HCT116 (cell line): ENCODE measurements at regions of chr4 and their contacts with region 1.

Region 1: GRCh38 chr4:182938205-182938645 is 21.0 kb upstream of the DCTD start:
- DNase-seq: peak; percentile 73
- ATAC-seq: peak; percentile 100
- H3K4me3 ChIP-seq: no peak overlapping the region
- H3K27ac ChIP-seq: no peak overlapping the region
- H3K4me1 ChIP-seq: peaks cover 0 to 7% of the 10 kb centered on the region in 2 experiments; a peak in 3 of 4 replicates
- H3K27me3 ChIP-seq: no peaks in the 10 kb centered on the region
- CTCF ChIP-seq: peak; percentile 90 to 93 (median 91)
- POLR2A ChIP-seq: no peak
- RAD21 ChIP-seq: peak; percentile 98

Region 2: GRCh38 chr4:182925298-182925738 is 12.9 kb before region 1 on chr4:
- CTCF ChIA-PET with region 1: interaction called, 27 read pairs
- POLR2A ChIA-PET with region 1: no interaction called
- RAD21 ChIA-PET with region 1: no interaction called
- intact Hi-C with region 1: no loop called
- DNase-seq: peak; percentile 91
- ATAC-seq: peak; percentile 99
- H3K4me3 ChIP-seq: no peak overlapping the region
- H3K27ac ChIP-seq: no peak overlapping the region
- H3K4me1 ChIP-seq: peaks cover 0 to 5% of the 10 kb centered on the region in 2 experiments; a peak in 1 of 4 replicates
- H3K27me3 ChIP-seq: no peaks in the 10 kb centered on the region
- CTCF ChIP-seq: peak; percentile 85 to 99 (median 89)
- POLR2A ChIP-seq: no peak
- RAD21 ChIP-seq: peak; percentile 96

Region 3: DNA sequence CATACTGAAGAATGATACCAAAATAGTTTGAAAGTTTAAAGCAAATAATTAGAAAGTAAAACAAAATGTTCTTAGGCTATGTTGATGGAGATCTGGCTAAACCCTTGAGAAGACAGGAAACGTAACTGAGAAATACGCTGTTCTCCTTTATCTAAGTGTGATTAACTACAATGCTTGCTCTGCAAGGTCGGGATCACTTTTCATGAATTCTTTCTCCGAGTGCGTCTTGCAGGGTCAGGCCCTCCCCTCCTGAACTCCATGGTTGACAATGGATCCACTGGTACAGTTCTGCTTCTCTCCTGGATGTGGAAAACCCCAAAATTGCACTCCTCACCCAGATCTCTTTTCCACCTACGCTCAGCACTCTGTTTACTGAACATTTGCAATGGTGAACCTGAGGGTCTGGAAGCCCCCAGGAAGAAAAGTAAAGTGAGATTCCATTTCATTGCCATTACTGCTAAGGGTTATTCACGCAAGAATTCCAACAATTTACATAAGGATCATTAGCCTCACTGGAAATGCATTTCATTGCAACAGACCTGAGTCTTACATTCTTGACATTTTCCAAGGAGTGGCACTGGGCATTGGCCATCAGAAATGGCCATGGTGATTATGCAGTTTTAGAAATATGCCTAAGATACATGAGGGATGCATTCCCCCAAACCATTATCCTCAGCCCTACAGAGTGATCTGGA is 136.2 kb after region 1 on chr4:
- CTCF ChIA-PET with region 1: interaction called, 10 read pairs
- POLR2A ChIA-PET with region 1: no interaction called
- RAD21 ChIA-PET with region 1: interaction called, 3 read pairs
- intact Hi-C with region 1: loop called (anchors 2 kb)
- DNase-seq: no peak
- ATAC-seq: no peak
- H3K4me3 ChIP-seq: no peak overlapping the region
- H3K27ac ChIP-seq: no peak overlapping the region
- H3K4me1 ChIP-seq: no peaks in the 10 kb centered on the region
- H3K27me3 ChIP-seq: no peaks in the 10 kb centered on the region
- CTCF ChIP-seq: no peak
- POLR2A ChIP-seq: no peak
- RAD21 ChIP-seq: no peak

Region 4: DNA sequence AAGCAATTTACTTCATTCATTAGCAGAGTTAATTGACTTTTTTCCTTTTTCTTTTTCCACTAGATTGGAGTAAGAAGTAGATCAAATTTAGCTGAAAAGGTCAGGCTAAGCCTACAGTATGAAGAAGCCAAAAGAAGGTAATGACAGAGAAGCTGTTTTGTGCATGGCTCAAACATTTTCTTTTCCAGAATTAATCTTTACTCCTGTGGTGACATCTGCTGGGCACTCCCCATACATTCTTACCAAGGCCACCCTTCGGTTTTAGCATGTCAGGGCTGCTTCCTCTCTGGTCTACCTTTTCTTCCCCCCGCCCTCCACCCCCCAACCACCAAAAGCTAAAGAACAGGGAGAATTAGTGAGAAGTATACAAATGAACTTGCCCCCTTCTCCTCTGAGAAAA is 311.6 kb after region 1 on chr4:
- CTCF ChIA-PET with region 1: interaction called, 19 read pairs
- POLR2A ChIA-PET with region 1: no interaction called
- RAD21 ChIA-PET with region 1: interaction called in 1 of 2 experiments, 3 read pairs
- intact Hi-C with region 1: no loop called
- DNase-seq: no peak
- ATAC-seq: peak; percentile 76
- H3K4me3 ChIP-seq: no peak overlapping the region
- H3K27ac ChIP-seq: no peak overlapping the region
- H3K4me1 ChIP-seq: no peaks in the 10 kb centered on the region
- H3K27me3 ChIP-seq: no peaks in the 10 kb centered on the region
- CTCF ChIP-seq: peak; percentile 24 to 62 (median 53); a peak in 4 of 6 replicates
- POLR2A ChIP-seq: no peak
- RAD21 ChIP-seq: peak; percentile 75

Region 5: GRCh38 chr4:183256756-183257385 is 318.6 kb after region 1 on chr4:
- CTCF ChIA-PET with region 1: interaction called, 59 read pairs
- POLR2A ChIA-PET with region 1: no interaction called
- RAD21 ChIA-PET with region 1: interaction called, 3 to 13 read pairs
- intact Hi-C with region 1: loop called (anchors 1 kb)
- DNase-seq: peak; percentile 33
- ATAC-seq: peak; percentile 94
- H3K4me3 ChIP-seq: no peak overlapping the region
- H3K27ac ChIP-seq: no peak overlapping the region
- H3K4me1 ChIP-seq: no peaks in the 10 kb centered on the region
- H3K27me3 ChIP-seq: no peaks in the 10 kb centered on the region
- CTCF ChIP-seq: peak; percentile 83 to 94 (median 87)
- POLR2A ChIP-seq: no peak
- RAD21 ChIP-seq: peak; percentile 74

Region 6: DNA sequence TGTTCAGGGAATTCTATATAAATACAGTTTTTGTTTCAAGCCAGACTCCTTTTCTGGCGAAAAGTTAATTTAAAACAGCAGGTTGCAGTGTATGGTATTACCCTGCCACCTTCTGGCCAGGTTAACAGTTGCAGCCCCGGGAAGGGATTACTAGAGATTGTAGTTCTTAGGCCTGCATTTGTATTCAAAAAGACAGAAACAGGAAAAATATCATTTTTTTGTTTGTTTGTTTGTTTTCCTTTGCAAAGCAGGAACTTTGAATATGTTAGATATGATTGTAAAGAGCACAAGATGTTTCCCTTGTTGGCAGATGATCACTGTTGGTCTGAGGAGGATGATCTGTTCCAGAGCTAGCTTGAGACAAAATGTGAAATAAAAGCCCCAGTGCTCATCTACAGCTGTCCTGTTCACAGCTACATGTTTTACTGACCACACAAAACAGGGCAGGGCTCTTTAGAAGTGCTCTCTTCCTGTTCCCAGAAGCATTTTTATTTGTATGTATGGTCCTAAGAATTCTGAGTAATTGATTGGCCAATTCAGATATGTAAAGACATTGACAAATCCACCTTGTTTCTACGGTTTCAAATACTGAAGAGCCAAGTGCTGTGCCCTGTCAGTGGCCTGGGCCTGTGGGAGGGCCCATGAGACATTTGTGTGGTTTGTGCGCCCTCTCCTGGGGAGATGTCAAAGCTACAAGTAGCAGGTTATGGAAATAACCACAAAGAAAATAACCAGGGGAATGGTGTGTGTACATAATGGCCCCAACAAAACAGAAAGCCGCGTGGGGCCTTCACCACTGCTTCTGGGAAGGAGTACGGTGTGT is 323.9 kb after region 1 on chr4:
- CTCF ChIA-PET with region 1: interaction called, 59 read pairs
- POLR2A ChIA-PET with region 1: no interaction called
- RAD21 ChIA-PET with region 1: interaction called, 11 to 13 read pairs
- intact Hi-C with region 1: loop called (anchors 1 kb)
- DNase-seq: peak; percentile 56
- ATAC-seq: peak; percentile 97
- H3K4me3 ChIP-seq: no peak overlapping the region
- H3K27ac ChIP-seq: 0 out of 2 replicates have a peak overlapping the region, but pooled peaks have one; percentile 6
- H3K4me1 ChIP-seq: peaks cover 0 to 4% of the 10 kb centered on the region in 2 experiments; a peak in 2 of 4 replicates
- H3K27me3 ChIP-seq: no peaks in the 10 kb centered on the region
- CTCF ChIP-seq: peak; percentile 84 to 87 (median 86)
- POLR2A ChIP-seq: no peak
- RAD21 ChIP-seq: peak; percentile 82